CD4-positive, alpha-beta T cell (primary cell): ENCODE measurements at regions of chrX and their contacts with region 1.

Region 1: GRCh38 chrX:39730662-39731397 is 366.9 kb downstream of the BCOR start:
- DNase-seq: peak; percentile 25 to 72 (median 50)
- ATAC-seq: peak; percentile 84
- H3K4me3 ChIP-seq: no peak overlapping the region
- H3K4me3 Mint-ChIP-seq: peak overlapping the region; percentile 55
- H3K27ac ChIP-seq: no peak overlapping the region
- H3K27ac Mint-ChIP-seq: peak overlapping the region; percentile 11
- H3K4me1 ChIP-seq: peaks cover 12% of the 10 kb centered on the region
- H3K4me1 Mint-ChIP-seq: peaks cover 7% of the 10 kb centered on the region
- H3K27me3 ChIP-seq: no peaks in the 10 kb centered on the region
- H3K27me3 Mint-ChIP-seq: no peaks in the 10 kb centered on the region
- CTCF ChIP-seq: peak; percentile 55

Region 2: DNA sequence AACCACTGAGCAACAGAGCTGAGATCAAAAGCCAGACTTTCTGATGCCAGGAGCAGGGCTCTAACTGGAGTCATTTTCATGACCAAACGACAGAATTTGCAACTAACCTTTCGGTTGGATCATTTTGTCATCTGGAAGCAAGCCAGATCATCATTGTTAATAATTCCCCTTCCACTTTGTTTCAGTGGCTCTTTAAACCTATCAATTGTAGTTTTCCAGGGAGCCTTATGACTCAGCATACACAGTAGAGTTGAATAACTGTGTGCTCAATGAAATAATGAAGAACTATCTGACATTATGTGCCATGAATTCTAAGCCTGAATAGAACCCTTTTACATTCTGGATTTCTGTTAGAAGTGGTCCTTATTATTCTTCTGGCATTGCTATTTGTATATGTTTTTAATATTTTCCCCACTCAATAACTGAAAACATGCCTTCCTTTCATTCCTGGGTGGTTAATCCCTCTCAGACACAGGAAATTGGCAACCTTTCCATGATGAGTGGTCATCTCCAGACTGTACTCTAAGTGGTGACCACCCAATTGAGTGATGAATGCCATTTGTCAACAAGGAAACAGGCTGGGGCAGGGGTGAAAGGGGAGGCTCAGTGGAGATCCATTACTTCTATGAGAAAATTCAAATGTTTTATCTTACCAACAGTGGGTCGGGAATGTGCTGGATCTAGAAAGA is 64.9 kb before region 1 on chrX:
- CTCF ChIA-PET with region 1: no interaction called
- POLR2A ChIA-PET with region 1: no interaction called
- intact Hi-C with region 1: loop called in 1 of 2 experiments (anchors 10 kb)
- DNase-seq: no peak
- ATAC-seq: no peak
- H3K4me3 ChIP-seq: no peak overlapping the region
- H3K4me3 Mint-ChIP-seq: no peak overlapping the region
- H3K27ac ChIP-seq: no peak overlapping the region
- H3K27ac Mint-ChIP-seq: no peak overlapping the region
- H3K4me1 ChIP-seq: no peaks in the 10 kb centered on the region
- H3K4me1 Mint-ChIP-seq: no peaks in the 10 kb centered on the region
- H3K27me3 ChIP-seq: no peaks in the 10 kb centered on the region
- H3K27me3 Mint-ChIP-seq: no peaks in the 10 kb centered on the region
- CTCF ChIP-seq: no peak

Region 3: GRCh38 chrX:39814391-39814790 is 83.6 kb after region 1 on chrX:
- CTCF ChIA-PET with region 1: no interaction called
- POLR2A ChIA-PET with region 1: no interaction called
- intact Hi-C with region 1: loop called in 1 of 2 experiments (anchors 5 kb)
- DNase-seq: peak in 13 of 14 experiments; percentile 9 to 75 (median 33)
- ATAC-seq: peak; percentile 63
- H3K4me3 ChIP-seq: no peak overlapping the region
- H3K4me3 Mint-ChIP-seq: no peak overlapping the region
- H3K27ac ChIP-seq: no peak overlapping the region
- H3K27ac Mint-ChIP-seq: no peak overlapping the region
- H3K4me1 ChIP-seq: peaks cover 14% of the 10 kb centered on the region
- H3K4me1 Mint-ChIP-seq: peaks cover 18% of the 10 kb centered on the region
- H3K27me3 ChIP-seq: no peaks in the 10 kb centered on the region
- H3K27me3 Mint-ChIP-seq: no peaks in the 10 kb centered on the region
- CTCF ChIP-seq: peak; percentile 40

Region 4: DNA sequence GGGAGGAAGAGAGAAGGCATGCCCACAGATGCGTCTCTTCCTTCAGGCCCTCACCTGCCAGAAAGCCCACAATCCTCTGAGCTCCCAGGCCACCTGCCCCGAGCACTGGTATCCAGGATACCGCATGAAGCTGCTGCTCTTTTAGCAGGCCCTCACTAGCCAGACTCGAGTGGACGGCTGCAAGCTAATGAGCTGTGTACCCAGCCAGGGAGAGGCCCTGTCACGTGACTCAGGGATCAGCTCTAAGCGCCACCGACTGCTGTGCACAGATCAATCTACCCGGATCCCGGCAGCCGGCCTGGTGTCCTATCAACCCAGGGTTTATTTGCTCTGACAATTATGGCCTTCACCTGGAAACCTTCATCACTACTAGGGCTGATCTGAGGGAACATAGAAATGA is 327.9 kb after region 1 on chrX:
- CTCF ChIA-PET with region 1: no interaction called
- POLR2A ChIA-PET with region 1: no interaction called
- intact Hi-C with region 1: loop called in 1 of 2 experiments (anchors 10 kb)
- DNase-seq: no peak
- ATAC-seq: no peak
- H3K4me3 ChIP-seq: no peak overlapping the region
- H3K4me3 Mint-ChIP-seq: no peak overlapping the region
- H3K27ac ChIP-seq: no peak overlapping the region
- H3K27ac Mint-ChIP-seq: no peak overlapping the region
- H3K4me1 ChIP-seq: peaks cover 11% of the 10 kb centered on the region
- H3K4me1 Mint-ChIP-seq: peaks cover 20% of the 10 kb centered on the region
- H3K27me3 ChIP-seq: no peaks in the 10 kb centered on the region
- H3K27me3 Mint-ChIP-seq: no peaks in the 10 kb centered on the region
- CTCF ChIP-seq: no peak

Region 5: DNA sequence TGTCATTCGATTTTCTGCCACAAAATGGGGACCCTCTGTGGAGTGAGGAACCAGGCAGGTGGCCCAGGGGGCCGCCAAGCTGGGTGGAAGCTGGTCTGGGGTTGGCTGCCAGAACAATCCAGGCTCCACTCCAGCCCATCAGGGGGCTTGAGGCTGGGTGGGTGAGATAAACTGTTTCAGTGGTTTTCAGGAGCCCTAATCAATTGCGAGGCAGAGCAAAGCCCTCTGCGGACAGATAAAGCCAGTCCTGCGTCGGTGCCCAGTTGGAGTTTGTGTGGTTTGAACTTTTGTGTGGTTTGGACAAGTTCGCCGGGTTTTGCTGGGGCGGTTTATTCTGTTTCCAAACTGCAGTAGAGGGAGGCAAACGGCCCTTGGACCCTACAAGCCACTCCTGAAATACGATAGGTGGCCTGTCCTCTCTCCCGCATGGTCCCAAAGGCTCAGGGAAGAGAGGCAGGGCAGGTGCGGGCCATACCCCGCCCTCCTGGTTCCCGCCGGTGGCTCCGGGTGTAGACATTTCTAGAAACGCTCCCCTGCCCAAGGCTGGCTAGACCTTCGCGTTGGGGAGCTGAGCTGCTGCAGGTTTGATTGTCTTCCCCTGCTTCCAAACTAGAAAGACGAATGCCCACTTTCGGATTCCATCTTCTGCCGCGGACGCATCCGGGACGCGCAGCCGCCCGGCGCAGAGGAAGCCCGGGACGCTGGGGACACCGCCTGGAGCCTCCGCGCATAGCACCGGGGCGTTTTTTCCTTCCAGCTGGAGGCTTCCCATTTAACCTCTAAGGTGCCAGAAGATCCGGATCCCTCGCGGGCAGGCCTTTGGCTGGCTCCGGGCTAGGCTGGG is 535.9 kb after region 1 on chrX:
- CTCF ChIA-PET with region 1: no interaction called
- POLR2A ChIA-PET with region 1: interaction called, 4 read pairs
- intact Hi-C with region 1: loop called in 1 of 2 experiments (anchors 2 kb)
- DNase-seq: peak; percentile 15 to 74 (median 42)
- ATAC-seq: peak; percentile 83
- H3K4me3 ChIP-seq: peak overlapping the region; percentile 67
- H3K4me3 Mint-ChIP-seq: peak overlapping the region; percentile 85
- H3K27ac ChIP-seq: no peak overlapping the region
- H3K27ac Mint-ChIP-seq: no peak overlapping the region
- H3K4me1 ChIP-seq: peaks cover 14% of the 10 kb centered on the region
- H3K4me1 Mint-ChIP-seq: peaks cover 6% of the 10 kb centered on the region
- H3K27me3 ChIP-seq: no peaks in the 10 kb centered on the region
- H3K27me3 Mint-ChIP-seq: no peaks in the 10 kb centered on the region
- CTCF ChIP-seq: peak; percentile 67